ENCODE measurements at regions of chr14 and their contacts with region 1.

Region 1: DNA sequence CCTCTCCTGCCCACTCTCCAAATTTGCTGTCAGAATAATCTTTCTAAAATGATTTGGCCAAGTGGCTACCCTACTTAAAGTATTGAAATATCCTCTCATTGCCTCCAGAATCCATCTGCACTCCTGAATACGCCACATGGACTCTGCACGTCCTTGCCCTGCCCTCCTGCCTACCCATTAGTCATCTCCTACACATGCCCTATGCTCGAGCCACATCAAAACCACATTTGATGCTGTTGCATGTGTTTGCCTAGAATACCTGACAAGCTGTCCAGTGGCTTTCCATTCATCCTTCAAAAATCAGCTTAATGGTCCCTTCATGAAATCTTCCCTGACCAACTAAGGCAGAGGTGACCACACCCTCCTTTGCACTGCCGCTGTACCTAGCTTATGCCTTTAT is 17.0 kb downstream of the VCPKMT start:
- DNase-seq: no peak
- ATAC-seq: no peak
- H3K4me3 ChIP-seq: no peak overlapping the region
- H3K27ac ChIP-seq: no peak overlapping the region
- H3K4me1 ChIP-seq: no peaks in the 10 kb centered on the region
- H3K27me3 ChIP-seq: no peaks in the 10 kb centered on the region
- CTCF ChIP-seq: no peak

Region 2: DNA sequence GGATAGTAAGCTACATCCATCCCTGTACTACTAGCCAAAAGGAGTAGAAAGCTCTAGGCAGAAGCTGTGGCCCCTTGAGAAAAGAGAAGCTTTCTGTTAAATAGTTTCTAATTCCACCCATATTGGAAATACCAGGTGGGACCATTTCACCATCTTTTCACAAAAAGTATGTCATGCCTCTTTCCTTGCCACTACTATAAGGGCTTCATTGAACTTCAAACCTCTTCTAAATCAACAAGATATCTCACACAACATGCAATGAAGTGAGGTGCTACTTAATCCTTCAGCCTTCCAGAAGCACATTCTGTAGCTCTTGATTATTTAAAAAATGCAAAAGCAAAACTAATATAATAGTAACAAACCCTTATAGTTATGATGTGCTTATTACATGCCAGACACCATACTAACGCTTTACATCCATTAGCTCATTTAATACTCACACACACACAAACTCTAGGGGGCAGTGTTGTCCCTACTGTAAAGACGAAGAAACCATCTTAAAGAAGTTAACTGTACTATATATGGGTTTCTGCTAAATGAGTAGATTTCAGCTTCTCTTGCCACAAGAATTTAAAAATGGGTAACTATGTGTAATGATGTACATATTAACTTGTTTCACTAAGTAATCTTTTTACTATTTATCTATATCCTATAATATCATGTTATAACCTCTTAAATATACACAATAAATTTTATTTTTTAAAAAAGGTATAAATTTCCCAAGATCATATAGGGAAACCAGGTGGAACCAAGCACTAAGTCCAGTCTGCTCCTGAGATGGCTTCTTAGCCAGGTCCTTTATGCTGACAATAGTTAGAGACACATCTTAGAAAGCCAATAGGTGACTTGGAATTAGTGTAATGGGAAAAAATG is 637.6 kb before region 1 on chr14:
- intact Hi-C with region 1: loop called in 1 of 2 experiments (anchors 5 kb)
- DNase-seq: no peak
- ATAC-seq: no peak
- H3K4me3 ChIP-seq: no peak overlapping the region
- H3K27ac ChIP-seq: no peak overlapping the region
- H3K4me1 ChIP-seq: no peaks in the 10 kb centered on the region
- H3K27me3 ChIP-seq: peaks cover 0 to 3% (median 0%) of the 10 kb centered on the region in 3 donors
- CTCF ChIP-seq: peak; percentile 49

Region 3: GRCh38 chr14:49879683-49880204 is 219.6 kb before region 1 on chr14:
- intact Hi-C with region 1: loop called in 1 of 2 experiments (anchors 5 kb)
- DNase-seq: peak in 1 of 2 donors; percentile 27
- ATAC-seq: peak; percentile 62 to 89 (median 80)
- H3K4me3 ChIP-seq: no peak overlapping the region
- H3K27ac ChIP-seq: no peak overlapping the region
- H3K4me1 ChIP-seq: no peaks in the 10 kb centered on the region
- H3K27me3 ChIP-seq: no peaks in the 10 kb centered on the region
- CTCF ChIP-seq: peak; percentile 51

Region 4: DNA sequence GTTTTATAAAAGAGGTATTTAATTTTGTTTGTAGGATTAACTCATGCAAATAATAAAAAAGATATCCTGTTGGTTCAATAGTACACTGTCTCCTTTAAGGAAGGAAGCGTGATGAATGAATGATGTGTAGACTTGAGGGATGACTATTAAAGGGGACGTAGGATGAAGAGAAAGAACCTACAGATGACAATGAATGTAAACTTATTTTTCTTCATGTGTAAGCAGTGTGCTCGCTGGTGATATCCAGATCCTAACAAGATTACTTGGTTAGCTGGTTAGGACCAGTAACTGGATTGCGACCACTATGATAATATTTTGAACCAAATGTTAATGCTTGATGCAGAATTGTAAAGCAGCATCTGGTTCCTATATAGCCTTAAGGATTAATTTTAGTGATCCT is 203.9 kb before region 1 on chr14:
- intact Hi-C with region 1: no loop called
- DNase-seq: no peak
- ATAC-seq: no peak
- H3K4me3 ChIP-seq: peak overlapping the region; percentile 90
- H3K27ac ChIP-seq: peak overlapping the region; percentile 99
- H3K4me1 ChIP-seq: peaks cover 45% of the 10 kb centered on the region
- H3K27me3 ChIP-seq: no peaks in the 10 kb centered on the region
- CTCF ChIP-seq: no peak

Measured in psoas muscle (tissue), 8 donors.